Gastrocnemius medialis (tissue), 4 donors: ENCODE measurements at regions of chr12 and their contacts with region 1.

Region 1: GRCh38 chr12:121436706-121437105 is 36.8 kb downstream of the RNF34 start:
- DNase-seq: no peak
- ATAC-seq: no peak
- H3K4me3 ChIP-seq: no peak overlapping the region
- H3K27ac ChIP-seq: no peak overlapping the region
- H3K4me1 ChIP-seq: no peaks in the 10 kb centered on the region
- H3K27me3 ChIP-seq: no peaks in the 10 kb centered on the region
- CTCF ChIP-seq: no peak
- POLR2A ChIP-seq: no peak

Region 2: GRCh38 chr12:121399391-121400331 is 37.0 kb before region 1 on chr12 and contains the start of gene RNF34:
- in situ Hi-C with region 1: no loop called
- intact Hi-C with region 1: no loop called
- DNase-seq: peak; percentile 99
- ATAC-seq: peak; percentile 92 to 94
- H3K4me3 ChIP-seq: peak within 1 kb of the TSS; percentile 90 to 97 (median 93)
- H3K27ac ChIP-seq: peak within 1 kb of the TSS; percentile 97 to 99 (median 98)
- H3K4me1 ChIP-seq: peaks cover 40 to 41% of the 10 kb centered on the region in 2 donors
- H3K27me3 ChIP-seq: no peaks in the 10 kb centered on the region
- CTCF ChIP-seq: peak in 1 of 5 experiments; percentile 25
- POLR2A ChIP-seq: peak; percentile 99
- total RNA-seq, gene RNF34: 32.3 to 57.1 (median 46.2) TPM

Region 3: GRCh38 chr12:121452340-121452984 is 15.8 kb after region 1 on chr12:
- in situ Hi-C with region 1: no loop called
- intact Hi-C with region 1: loop called (anchors 1 kb)
- DNase-seq: no peak
- ATAC-seq: no peak
- H3K4me3 ChIP-seq: peak overlapping the region in 3 of 4 donors; percentile 13 to 23 (median 17)
- H3K27ac ChIP-seq: peak overlapping the region in 2 of 4 donors; percentile 9 to 14
- H3K4me1 ChIP-seq: peaks cover 4 to 17% of the 10 kb centered on the region in 2 donors
- H3K27me3 ChIP-seq: no peaks in the 10 kb centered on the region
- CTCF ChIP-seq: no peak
- POLR2A ChIP-seq: no peak